ENCODE measurements at regions of chr3 and their contacts with region 1.

Region 1: GRCh38 chr3:88005066-88005465 is 53.7 kb downstream of the CGGBP1 start:
- DNase-seq: peak in 1 of 35 experiments; percentile 56
- ATAC-seq: peak; percentile 45 to 70 (median 66)
- H3K4me3 ChIP-seq: no peak overlapping the region
- H3K4me3 Mint-ChIP-seq: no peak overlapping the region
- H3K27ac ChIP-seq: no peak overlapping the region
- H3K27ac Mint-ChIP-seq: no peak overlapping the region
- H3K4me1 ChIP-seq: no peaks in the 10 kb centered on the region
- H3K4me1 Mint-ChIP-seq: peaks cover 6 to 14% (median 11%) of the 10 kb centered on the region in 3 donors
- H3K27me3 ChIP-seq: no peaks in the 10 kb centered on the region
- H3K27me3 Mint-ChIP-seq: peaks cover 0 to 5% of the 10 kb centered on the region in 2 donors

Region 2: GRCh38 chr3:87260270-87260669 is 744.8 kb before region 1 on chr3:
- CTCF ChIA-PET with region 1: interaction called, 5 to 16 read pairs
- POLR2A ChIA-PET with region 1: interaction called in 1 of 2 experiments, 3 read pairs
- DNase-seq: peak in 26 of 35 experiments; percentile 3 to 61 (median 22)
- ATAC-seq: peak in 2 of 4 experiments; percentile 61
- H3K4me3 ChIP-seq: no peak overlapping the region
- H3K4me3 Mint-ChIP-seq: no peak overlapping the region
- H3K27ac ChIP-seq: no peak overlapping the region
- H3K27ac Mint-ChIP-seq: no peak overlapping the region
- H3K4me1 ChIP-seq: no peaks in the 10 kb centered on the region
- H3K4me1 Mint-ChIP-seq: peaks cover 3 to 7% (median 5%) of the 10 kb centered on the region in 3 donors
- H3K27me3 ChIP-seq: no peaks in the 10 kb centered on the region
- H3K27me3 Mint-ChIP-seq: no peaks in the 10 kb centered on the region

Region 3: DNA sequence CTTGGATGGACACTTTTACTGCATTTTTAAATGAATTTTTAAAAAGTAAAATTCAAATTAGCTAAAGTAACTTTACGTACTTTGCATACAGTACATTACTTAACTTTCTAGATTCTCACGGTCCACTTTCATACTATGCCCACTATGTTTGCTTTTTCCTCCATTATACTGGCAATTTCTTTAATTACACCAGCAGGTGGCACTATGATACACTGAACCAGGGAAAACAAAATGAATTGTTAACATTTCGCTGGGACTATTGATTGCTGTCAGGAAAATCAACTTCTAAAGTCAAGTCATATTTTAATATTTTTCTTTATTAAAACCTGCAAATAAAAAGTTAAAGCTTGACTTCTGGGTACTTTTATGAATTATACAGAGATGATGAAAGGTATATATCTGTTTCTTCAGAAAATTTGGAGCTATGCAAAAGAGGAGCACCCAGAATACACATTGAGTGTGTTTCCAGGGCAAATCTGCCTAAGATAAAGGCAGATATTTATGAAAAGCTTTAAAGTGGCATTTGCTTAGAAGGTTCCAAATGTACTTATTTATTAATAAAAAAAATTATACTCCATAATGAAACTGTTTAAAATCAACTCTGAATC is 706.9 kb before region 1 on chr3:
- CTCF ChIA-PET with region 1: interaction called in 1 of 2 experiments, 23 read pairs
- POLR2A ChIA-PET with region 1: interaction called in 1 of 2 experiments, 4 read pairs
- DNase-seq: peak in 1 of 35 experiments; percentile 50
- ATAC-seq: peak; percentile 42 to 60 (median 58)
- H3K4me3 ChIP-seq: no peak overlapping the region
- H3K4me3 Mint-ChIP-seq: no peak overlapping the region
- H3K27ac ChIP-seq: no peak overlapping the region
- H3K27ac Mint-ChIP-seq: no peak overlapping the region
- H3K4me1 ChIP-seq: no peaks in the 10 kb centered on the region
- H3K4me1 Mint-ChIP-seq: peaks cover 0 to 2% (median 0%) of the 10 kb centered on the region in 3 donors
- H3K27me3 ChIP-seq: no peaks in the 10 kb centered on the region
- H3K27me3 Mint-ChIP-seq: no peaks in the 10 kb centered on the region

Region 4: GRCh38 chr3:87350364-87351199 is 654.5 kb before region 1 on chr3:
- CTCF ChIA-PET with region 1: interaction called, 13 to 34 read pairs
- POLR2A ChIA-PET with region 1: no interaction called
- DNase-seq: peak in 9 of 35 experiments; percentile 1 to 68 (median 5)
- ATAC-seq: peak; percentile 77 to 83 (median 80)
- H3K4me3 ChIP-seq: no peak overlapping the region
- H3K4me3 Mint-ChIP-seq: no peak overlapping the region
- H3K27ac ChIP-seq: no peak overlapping the region
- H3K27ac Mint-ChIP-seq: no peak overlapping the region
- H3K4me1 ChIP-seq: no peaks in the 10 kb centered on the region
- H3K4me1 Mint-ChIP-seq: no peaks in the 10 kb centered on the region
- H3K27me3 ChIP-seq: peaks cover 0 to 4% of the 10 kb centered on the region in 2 experiments
- H3K27me3 Mint-ChIP-seq: peaks cover 6 to 7% of the 10 kb centered on the region in 2 donors

Region 5: DNA sequence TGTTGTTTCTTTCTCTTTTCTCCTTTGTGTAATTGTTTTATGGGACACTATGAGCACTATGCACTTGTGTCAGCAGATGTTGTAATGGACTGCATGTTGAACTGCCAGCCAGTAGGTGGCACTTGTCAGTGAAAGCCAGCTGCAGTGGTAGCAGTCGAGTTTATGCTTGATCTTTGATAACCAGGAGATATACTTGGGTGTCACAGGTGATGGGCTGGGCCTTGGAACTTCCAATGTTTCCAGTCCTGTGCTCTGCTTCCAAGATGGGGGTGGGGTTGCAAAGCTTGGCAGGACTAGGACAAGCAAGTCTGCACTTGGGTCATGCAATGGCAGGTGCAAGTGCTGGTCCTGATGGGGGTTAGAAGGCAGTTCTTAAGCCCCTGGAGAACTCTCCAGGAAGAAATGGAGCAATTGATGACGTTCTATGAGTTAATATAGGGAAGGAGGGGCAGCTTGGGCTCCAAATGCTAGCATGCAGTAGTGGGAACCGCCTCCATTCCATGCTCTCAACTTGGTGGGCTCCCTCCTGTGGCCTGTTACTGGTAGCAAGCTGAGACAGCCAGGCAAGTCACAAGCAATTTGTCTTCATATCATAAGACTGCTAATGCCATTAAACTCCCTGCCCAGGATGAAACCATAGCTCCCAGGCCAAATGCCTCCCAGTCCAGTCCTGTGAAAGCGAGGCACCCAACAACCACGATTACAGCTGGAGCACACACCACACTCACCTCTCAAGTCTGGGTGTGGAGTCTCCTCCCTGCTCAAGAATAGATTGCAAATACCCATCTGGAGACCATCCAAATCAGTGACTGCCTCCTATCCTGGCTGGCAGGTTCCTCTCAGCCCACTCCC is 233.5 kb before region 1 on chr3:
- CTCF ChIA-PET with region 1: interaction called in 1 of 2 experiments, 13 read pairs
- POLR2A ChIA-PET with region 1: no interaction called
- DNase-seq: peak in 26 of 35 experiments; percentile 4 to 61 (median 18)
- ATAC-seq: peak; percentile 48 to 73 (median 58)
- H3K4me3 ChIP-seq: no peak overlapping the region
- H3K4me3 Mint-ChIP-seq: no peak overlapping the region
- H3K27ac ChIP-seq: no peak overlapping the region
- H3K27ac Mint-ChIP-seq: no peak overlapping the region
- H3K4me1 ChIP-seq: no peaks in the 10 kb centered on the region
- H3K4me1 Mint-ChIP-seq: no peaks in the 10 kb centered on the region
- H3K27me3 ChIP-seq: no peaks in the 10 kb centered on the region
- H3K27me3 Mint-ChIP-seq: peaks cover 8 to 14% of the 10 kb centered on the region in 2 donors

Region 6: DNA sequence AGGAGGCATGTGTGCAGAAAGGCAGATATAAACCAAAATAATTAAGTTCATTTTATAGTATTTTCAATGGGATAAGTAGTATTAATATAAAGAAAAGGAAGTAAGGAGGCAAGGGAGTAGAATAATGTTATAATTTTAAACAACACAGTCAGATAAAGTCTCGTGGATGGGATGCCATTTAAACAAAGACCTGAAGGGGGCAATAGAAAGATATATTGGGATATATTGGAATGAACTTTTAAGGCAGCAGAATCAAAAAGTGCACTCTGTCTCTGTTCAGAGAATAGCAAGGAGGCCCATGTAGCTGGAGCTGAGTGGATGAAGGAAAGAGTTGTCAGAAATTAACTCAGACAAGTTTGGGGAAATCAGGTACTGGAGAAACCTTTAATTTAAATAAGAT is 105.0 kb before region 1 on chr3:
- CTCF ChIA-PET with region 1: no interaction called
- POLR2A ChIA-PET with region 1: no interaction called
- DNase-seq: peak in 1 of 35 experiments; percentile 9
- ATAC-seq: no peak
- H3K4me3 ChIP-seq: no peak overlapping the region
- H3K4me3 Mint-ChIP-seq: no peak overlapping the region
- H3K27ac ChIP-seq: no peak overlapping the region
- H3K27ac Mint-ChIP-seq: no peak overlapping the region
- H3K4me1 ChIP-seq: no peaks in the 10 kb centered on the region
- H3K4me1 Mint-ChIP-seq: no peaks in the 10 kb centered on the region
- H3K27me3 ChIP-seq: no peaks in the 10 kb centered on the region
- H3K27me3 Mint-ChIP-seq: no peaks in the 10 kb centered on the region

Region 7: DNA sequence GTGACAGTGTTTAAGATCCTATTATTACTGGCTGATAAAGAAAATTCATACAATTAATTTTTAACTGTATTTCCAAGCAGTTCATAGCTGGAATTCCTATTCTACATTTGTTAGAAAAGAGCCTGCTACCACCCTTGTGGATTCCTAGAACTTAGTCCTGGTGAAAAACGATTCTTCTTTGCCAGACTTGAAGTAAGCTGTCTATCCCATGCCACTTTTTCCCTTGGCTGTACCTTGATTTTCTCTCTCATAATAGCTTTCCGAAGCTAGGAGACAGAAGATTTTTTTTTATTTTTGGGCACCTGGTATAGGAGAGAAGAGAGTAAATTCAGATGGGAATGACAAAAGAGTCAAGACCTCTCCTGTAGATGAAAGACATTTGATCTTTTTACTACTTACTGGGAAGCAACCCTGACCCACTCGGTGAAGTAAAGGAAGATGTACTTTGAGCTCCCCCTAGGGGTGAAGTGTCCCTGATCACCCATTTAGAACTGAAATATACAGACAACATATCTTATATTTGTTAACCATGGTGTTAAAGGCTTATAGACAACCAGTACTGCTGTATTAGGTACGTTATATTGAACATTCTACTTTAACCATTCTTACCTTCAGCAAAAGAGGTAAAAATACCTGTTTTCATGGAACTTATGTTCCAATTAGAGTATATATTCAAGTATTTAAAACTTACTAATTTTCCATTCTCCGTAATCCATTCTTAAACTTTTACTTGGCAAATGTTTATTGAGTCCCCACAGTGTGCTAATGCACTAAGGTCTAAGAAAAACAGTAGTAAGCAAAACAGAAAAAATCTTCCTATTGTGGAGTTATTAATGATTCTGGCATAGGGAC is 108.5 kb after region 1 on chr3:
- CTCF ChIA-PET with region 1: interaction called, 5 to 14 read pairs
- POLR2A ChIA-PET with region 1: no interaction called
- DNase-seq: peak in 31 of 35 experiments; percentile 6 to 83 (median 44)
- ATAC-seq: peak; percentile 69 to 88 (median 81)
- H3K4me3 ChIP-seq: no peak overlapping the region
- H3K4me3 Mint-ChIP-seq: no peak overlapping the region
- H3K27ac ChIP-seq: no peak overlapping the region
- H3K27ac Mint-ChIP-seq: peak overlapping the region in 1 of 2 donors; percentile 34
- H3K4me1 ChIP-seq: no peaks in the 10 kb centered on the region
- H3K4me1 Mint-ChIP-seq: peaks cover 22 to 40% (median 30%) of the 10 kb centered on the region in 3 donors
- H3K27me3 ChIP-seq: no peaks in the 10 kb centered on the region
- H3K27me3 Mint-ChIP-seq: no peaks in the 10 kb centered on the region

Region 8: GRCh38 chr3:88936831-88937230 is 931.8 kb after region 1 on chr3:
- CTCF ChIA-PET with region 1: no interaction called
- POLR2A ChIA-PET with region 1: no interaction called
- DNase-seq: no peak
- ATAC-seq: no peak
- H3K4me3 ChIP-seq: no peak overlapping the region
- H3K4me3 Mint-ChIP-seq: no peak overlapping the region
- H3K27ac ChIP-seq: no peak overlapping the region
- H3K27ac Mint-ChIP-seq: no peak overlapping the region
- H3K4me1 ChIP-seq: no peaks in the 10 kb centered on the region
- H3K4me1 Mint-ChIP-seq: no peaks in the 10 kb centered on the region
- H3K27me3 ChIP-seq: no peaks in the 10 kb centered on the region
- H3K27me3 Mint-ChIP-seq: no peaks in the 10 kb centered on the region

Region 9: DNA sequence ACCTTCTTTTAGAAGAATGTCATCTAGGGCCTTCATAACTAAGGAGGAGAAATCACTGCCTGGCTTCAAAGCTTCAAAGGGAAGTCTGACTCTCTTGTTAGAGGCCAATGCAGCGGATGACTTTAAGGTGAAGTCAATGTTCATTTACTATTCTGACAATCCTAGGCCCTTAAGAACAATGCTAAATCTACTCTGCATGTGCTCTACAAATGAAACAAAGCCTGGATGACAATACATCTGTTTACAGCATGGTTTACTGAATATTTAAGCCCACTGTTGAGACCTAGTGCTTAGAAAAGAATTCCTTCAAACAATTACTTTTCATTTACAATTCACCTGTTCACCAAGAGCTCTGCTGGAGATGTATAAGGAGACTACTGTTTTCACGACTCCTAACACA is 941.9 kb after region 1 on chr3:
- CTCF ChIA-PET with region 1: no interaction called
- POLR2A ChIA-PET with region 1: no interaction called
- DNase-seq: no peak
- ATAC-seq: no peak
- H3K4me3 ChIP-seq: no peak overlapping the region
- H3K4me3 Mint-ChIP-seq: no peak overlapping the region
- H3K27ac ChIP-seq: no peak overlapping the region
- H3K27ac Mint-ChIP-seq: no peak overlapping the region
- H3K4me1 ChIP-seq: no peaks in the 10 kb centered on the region
- H3K4me1 Mint-ChIP-seq: no peaks in the 10 kb centered on the region
- H3K27me3 ChIP-seq: no peaks in the 10 kb centered on the region
- H3K27me3 Mint-ChIP-seq: no peaks in the 10 kb centered on the region